ENCODE measurements at regions of chr3 and their contacts with region 1.

Region 1: DNA sequence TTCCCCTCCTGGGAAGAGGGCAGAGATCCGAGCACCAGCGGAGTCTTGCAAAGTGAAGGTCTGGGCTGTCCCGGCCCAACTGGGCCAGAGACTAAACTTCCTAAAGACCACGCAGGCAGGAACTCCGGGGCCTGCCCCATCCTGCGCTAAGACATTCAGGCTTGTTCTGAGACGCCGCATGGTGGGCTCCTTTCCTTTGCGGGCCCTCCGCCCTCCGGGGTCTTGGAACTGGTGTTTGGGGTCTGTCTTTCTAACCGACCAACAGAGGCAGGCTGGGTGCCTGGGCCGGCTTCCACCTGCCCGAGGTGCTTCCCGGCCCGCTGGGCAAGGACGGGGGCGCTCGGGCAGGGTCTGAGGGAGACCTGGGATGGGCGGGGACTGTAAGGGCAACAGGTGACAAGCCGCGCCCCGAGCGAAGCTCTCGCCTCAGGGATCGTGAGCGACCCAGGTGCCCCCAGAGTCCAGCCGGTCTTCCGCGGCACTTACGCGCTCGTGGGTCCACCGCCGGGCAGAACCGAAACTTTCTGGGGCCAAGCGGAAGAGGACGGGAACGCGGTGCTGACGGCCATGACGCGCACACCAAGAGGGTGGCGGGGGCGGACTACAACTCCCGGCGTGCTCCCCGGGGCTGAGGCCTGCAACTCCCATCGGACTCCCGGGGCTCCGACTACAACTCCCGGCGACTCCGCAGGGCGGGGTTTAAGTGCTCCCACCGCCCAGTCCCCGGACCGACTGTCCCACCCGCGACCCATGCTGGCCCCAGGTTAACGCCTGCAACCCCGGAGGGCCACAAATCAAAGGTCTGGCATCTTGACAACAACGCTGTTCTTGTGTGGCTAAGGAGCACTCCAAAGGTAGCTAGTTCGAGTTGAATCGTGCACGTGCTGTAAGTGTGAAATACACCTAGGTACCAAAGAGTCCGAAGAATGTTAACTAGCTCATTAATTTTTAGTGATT is at the start of gene FYCO1:
- DNase-seq: peak; percentile 94
- ATAC-seq: peak; percentile 83
- H3K4me3 Mint-ChIP-seq: peak within 1 kb of the TSS; percentile 87
- H3K27ac Mint-ChIP-seq: peak within 1 kb of the TSS; percentile 92
- H3K4me1 Mint-ChIP-seq: peaks cover 62% of the 10 kb centered on the region
- H3K27me3 Mint-ChIP-seq: peaks cover 4% of the 10 kb centered on the region
- total RNA-seq, gene FYCO1: 16.6 to 19.5 TPM

Region 2: GRCh38 chr3:45958321-45958791 is 37.2 kb before region 1 on chr3:
- CTCF ChIA-PET with region 1: interaction called, 6 read pairs
- POLR2A ChIA-PET with region 1: interaction called, 31 read pairs
- DNase-seq: no peak
- ATAC-seq: no peak
- H3K4me3 Mint-ChIP-seq: no peak overlapping the region
- H3K27ac Mint-ChIP-seq: peak overlapping the region; percentile 69
- H3K4me1 Mint-ChIP-seq: peaks cover 76% of the 10 kb centered on the region
- H3K27me3 Mint-ChIP-seq: no peaks in the 10 kb centered on the region

Region 3: DNA sequence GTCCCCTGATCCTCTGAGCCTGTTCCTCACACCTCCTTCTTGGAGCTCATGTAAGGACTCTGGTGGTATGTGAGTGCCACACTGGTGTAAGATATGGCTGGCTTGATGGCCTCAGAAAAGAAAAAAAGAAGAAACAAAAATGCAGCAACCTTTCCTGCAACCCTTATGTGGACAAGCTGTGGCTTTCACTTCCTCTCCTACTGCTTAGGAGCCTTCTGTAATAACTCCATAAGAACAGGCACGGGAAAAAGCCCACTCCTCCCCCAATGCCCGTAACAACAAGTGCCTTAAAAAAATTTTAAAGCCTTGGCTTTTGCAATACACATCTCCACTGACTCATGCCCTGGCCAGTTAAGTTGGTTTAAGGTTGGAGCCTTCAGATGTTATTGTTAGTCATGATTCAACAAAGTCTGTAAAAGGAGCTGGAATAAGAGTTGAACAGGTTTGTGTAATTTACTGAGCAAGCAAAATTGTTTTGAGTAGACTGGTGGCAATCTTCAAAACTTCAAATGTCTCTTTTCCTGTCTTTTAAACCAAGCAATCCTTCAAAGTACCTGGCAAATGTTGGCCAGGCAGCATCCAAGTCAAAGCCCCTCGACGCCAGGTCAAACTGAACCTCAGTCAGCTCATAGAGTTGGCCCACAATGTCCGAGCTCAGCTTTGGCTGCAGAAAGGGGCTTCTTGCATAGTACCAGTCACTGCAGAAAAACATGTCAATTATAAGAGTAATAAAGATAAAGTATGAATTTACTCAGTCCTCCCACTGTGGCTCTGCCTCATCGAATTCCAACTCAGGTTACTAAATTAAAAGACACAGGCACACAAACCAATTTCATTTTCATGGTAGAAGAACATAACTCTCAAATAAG is 22.7 kb before region 1 on chr3:
- CTCF ChIA-PET with region 1: interaction called, 28 read pairs
- POLR2A ChIA-PET with region 1: interaction called, 8 read pairs
- DNase-seq: no peak
- ATAC-seq: peak; percentile 29
- H3K4me3 Mint-ChIP-seq: peak overlapping the region; percentile 25
- H3K27ac Mint-ChIP-seq: peak overlapping the region; percentile 79
- H3K4me1 Mint-ChIP-seq: peaks cover 90% of the 10 kb centered on the region
- H3K27me3 Mint-ChIP-seq: no peaks in the 10 kb centered on the region

Region 4: GRCh38 chr3:45978006-45978761 is 17.3 kb before region 1 on chr3:
- CTCF ChIA-PET with region 1: interaction called, 18 read pairs
- POLR2A ChIA-PET with region 1: interaction called, 20 read pairs
- DNase-seq: peak; percentile 81
- ATAC-seq: peak; percentile 55
- H3K4me3 Mint-ChIP-seq: peak overlapping the region; percentile 56
- H3K27ac Mint-ChIP-seq: peak overlapping the region; percentile 88
- H3K4me1 Mint-ChIP-seq: peaks cover 91% of the 10 kb centered on the region
- H3K27me3 Mint-ChIP-seq: no peaks in the 10 kb centered on the region

Region 5: GRCh38 chr3:45984331-45985312 is 10.9 kb before region 1 on chr3:
- CTCF ChIA-PET with region 1: interaction called, 18 read pairs
- POLR2A ChIA-PET with region 1: interaction called, 20 read pairs
- DNase-seq: no peak
- ATAC-seq: no peak
- H3K4me3 Mint-ChIP-seq: no peak overlapping the region
- H3K27ac Mint-ChIP-seq: peak overlapping the region; percentile 43
- H3K4me1 Mint-ChIP-seq: peaks cover 92% of the 10 kb centered on the region
- H3K27me3 Mint-ChIP-seq: no peaks in the 10 kb centered on the region

Measured in activated CD8-positive, alpha-beta T cell treated with anti-CD3 and anti-CD28 coated beads, Interleukin-2, amount 10 ng/mL, durations not matched to agents 7 days and 5 days (primary cell).